ENCODE measurements at regions of chr2 and their contacts with region 1.

Region 1: DNA sequence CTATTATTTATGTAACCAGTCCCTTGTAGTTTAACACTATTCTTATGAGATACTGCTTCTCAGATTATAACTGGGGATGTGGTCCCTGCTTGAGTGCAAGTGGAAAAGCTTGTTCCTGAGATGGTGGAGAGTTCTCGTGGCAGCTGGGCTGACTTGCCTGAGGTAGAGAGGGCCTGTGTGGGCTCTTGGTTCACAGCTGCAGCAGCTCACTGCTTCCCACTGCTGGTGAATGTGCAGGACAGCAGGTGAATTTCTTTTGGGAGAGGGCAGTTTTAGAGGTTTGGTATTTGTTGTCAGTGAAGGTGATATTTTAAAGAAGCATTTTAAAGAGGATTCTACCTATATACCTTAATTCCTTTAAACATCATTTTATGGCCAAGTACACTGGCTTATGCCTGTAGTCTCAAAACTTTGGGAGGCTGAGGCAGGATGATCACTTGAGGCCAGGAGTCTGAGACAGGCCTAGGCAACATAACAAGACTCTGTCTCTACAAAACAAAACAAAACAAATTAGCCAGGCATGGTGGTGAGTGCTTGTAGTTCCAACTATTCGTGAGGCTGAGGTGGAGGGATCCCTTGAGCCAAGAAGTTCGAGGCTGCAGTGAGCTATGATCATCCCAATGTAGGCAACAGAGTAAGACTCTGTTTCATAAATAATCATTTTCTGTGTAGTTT is 94.8 kb downstream of the MTA3 start:
- DNase-seq: peak; percentile 84
- H3K4me3 ChIP-seq: peak overlapping the region in 1 of 2 experiments; percentile 7; a peak in 1 of 4 replicates
- H3K27ac ChIP-seq: no peak overlapping the region
- H3K4me1 ChIP-seq: peaks cover 0 to 9% of the 10 kb centered on the region in 2 experiments; a peak in 1 of 4 replicates
- H3K27me3 ChIP-seq: no peaks in the 10 kb centered on the region
- CTCF ChIP-seq: peak; percentile 100
- EP300 ChIP-seq: no peak
- RAD21 ChIP-seq: peak; percentile 100

Region 2: GRCh38 chr2:42296226-42296625 is 367.0 kb before region 1 on chr2:
- CTCF ChIA-PET with region 1: no interaction called
- POLR2A ChIA-PET with region 1: no interaction called
- DNase-seq: no peak
- H3K4me3 ChIP-seq: no peak overlapping the region
- H3K27ac ChIP-seq: no peak overlapping the region
- H3K4me1 ChIP-seq: peaks cover 0 to 12% of the 10 kb centered on the region in 2 experiments; a peak in 2 of 4 replicates
- H3K27me3 ChIP-seq: no peaks in the 10 kb centered on the region
- CTCF ChIP-seq: no peak
- EP300 ChIP-seq: no peak
- RAD21 ChIP-seq: no peak

Region 3: GRCh38 chr2:42480402-42480801 is 182.8 kb before region 1 on chr2:
- CTCF ChIA-PET with region 1: interaction called, 11 read pairs
- POLR2A ChIA-PET with region 1: no interaction called
- DNase-seq: no peak
- H3K4me3 ChIP-seq: no peak overlapping the region
- H3K27ac ChIP-seq: no peak overlapping the region
- H3K4me1 ChIP-seq: no peaks in the 10 kb centered on the region
- H3K27me3 ChIP-seq: no peaks in the 10 kb centered on the region
- CTCF ChIP-seq: no peak
- EP300 ChIP-seq: no peak
- RAD21 ChIP-seq: no peak

Region 4: DNA sequence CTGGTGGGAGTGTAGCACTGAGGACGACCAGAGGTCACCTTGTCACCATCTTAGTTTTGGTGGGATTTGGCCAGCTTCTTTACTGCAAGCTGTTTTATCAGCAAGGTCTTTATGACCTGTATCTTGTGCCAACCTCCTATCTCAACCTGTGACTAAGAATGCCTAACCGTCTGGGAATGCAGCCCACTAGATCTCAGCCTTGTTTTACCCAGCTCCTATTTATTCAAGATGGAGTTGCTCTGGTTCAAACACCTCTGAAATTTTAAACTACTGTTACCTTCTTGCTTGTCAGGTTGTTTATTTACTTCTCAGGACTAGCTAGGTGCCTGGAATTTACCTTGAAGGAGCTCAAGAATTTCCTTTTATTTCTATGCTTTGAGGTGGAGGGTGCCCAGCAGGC is 160.0 kb before region 1 on chr2:
- CTCF ChIA-PET with region 1: interaction called, 107 read pairs
- POLR2A ChIA-PET with region 1: no interaction called
- DNase-seq: no peak
- H3K4me3 ChIP-seq: no peak overlapping the region
- H3K27ac ChIP-seq: no peak overlapping the region
- H3K4me1 ChIP-seq: no peaks in the 10 kb centered on the region
- H3K27me3 ChIP-seq: no peaks in the 10 kb centered on the region
- CTCF ChIP-seq: no peak
- EP300 ChIP-seq: no peak
- RAD21 ChIP-seq: no peak

Region 5: DNA sequence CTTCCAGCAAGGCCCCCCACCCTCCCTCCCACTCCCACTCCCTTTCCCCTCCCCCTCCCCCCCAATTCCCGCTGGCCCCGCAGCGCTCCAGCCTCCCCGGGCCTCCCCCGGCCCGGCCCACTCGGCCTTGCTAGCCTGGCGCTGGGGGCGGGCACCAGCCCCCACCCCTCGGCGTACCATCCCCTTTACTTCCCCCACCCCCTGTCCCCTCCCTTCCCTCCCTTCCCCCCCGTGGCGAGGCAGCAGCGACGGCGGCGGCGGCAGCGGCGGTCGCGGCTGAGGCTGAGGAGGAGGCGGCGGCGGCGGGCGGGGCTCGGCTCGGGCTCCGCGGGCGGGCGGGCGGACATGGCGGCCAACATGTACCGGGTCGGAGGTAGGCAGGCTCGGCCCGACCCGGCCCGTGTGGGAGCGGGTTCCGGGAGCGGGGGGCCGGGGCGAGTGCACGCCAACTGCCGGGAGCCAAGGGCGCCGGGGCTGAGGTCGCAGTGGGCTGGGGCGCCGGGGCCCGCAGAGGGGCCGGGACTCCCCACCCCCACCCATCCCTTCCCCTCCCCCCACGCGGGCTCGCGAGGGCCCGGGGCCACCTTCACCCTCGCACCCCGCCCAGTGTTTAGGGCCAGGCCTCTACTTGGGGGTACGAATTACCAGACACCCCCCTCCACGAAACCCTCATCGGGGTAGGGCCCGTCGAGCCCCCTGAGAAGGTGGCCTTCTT is 94.7 kb before region 1 on chr2 and contains the start of gene MTA3:
- CTCF ChIA-PET with region 1: interaction called, 27 read pairs
- POLR2A ChIA-PET with region 1: no interaction called
- DNase-seq: peak; percentile 93
- H3K4me3 ChIP-seq: peak within 1 kb of the TSS; percentile 63 to 78
- H3K27ac ChIP-seq: peak within 1 kb of the TSS; percentile 40 to 88
- H3K4me1 ChIP-seq: peaks cover 0 to 12% of the 10 kb centered on the region in 2 experiments; a peak in 2 of 4 replicates
- H3K27me3 ChIP-seq: no peaks in the 10 kb centered on the region
- CTCF ChIP-seq: no peak
- EP300 ChIP-seq: no peak
- RAD21 ChIP-seq: no peak
- polyA plus RNA-seq, gene MTA3: 30.8 and 32.3 TPM in 2 replicates

Region 6: GRCh38 chr2:42652086-42652485 is 11.2 kb before region 1 on chr2:
- CTCF ChIA-PET with region 1: interaction called, 33 read pairs
- POLR2A ChIA-PET with region 1: no interaction called
- DNase-seq: no peak
- H3K4me3 ChIP-seq: no peak overlapping the region
- H3K27ac ChIP-seq: no peak overlapping the region
- H3K4me1 ChIP-seq: peaks cover 0 to 2% of the 10 kb centered on the region in 2 experiments; a peak in 2 of 4 replicates
- H3K27me3 ChIP-seq: no peaks in the 10 kb centered on the region
- CTCF ChIP-seq: no peak
- EP300 ChIP-seq: no peak
- RAD21 ChIP-seq: no peak

Region 7: GRCh38 chr2:42824454-42824807 is 161.2 kb after region 1 on chr2:
- CTCF ChIA-PET with region 1: no interaction called
- POLR2A ChIA-PET with region 1: no interaction called
- DNase-seq: no peak
- H3K4me3 ChIP-seq: no peak overlapping the region
- H3K27ac ChIP-seq: no peak overlapping the region
- H3K4me1 ChIP-seq: peaks cover 0 to 12% of the 10 kb centered on the region in 2 experiments; a peak in 1 of 4 replicates
- H3K27me3 ChIP-seq: no peaks in the 10 kb centered on the region
- CTCF ChIP-seq: no peak
- EP300 ChIP-seq: no peak
- RAD21 ChIP-seq: no peak

Region 8: GRCh38 chr2:42835577-42836371 is 172.5 kb after region 1 on chr2:
- CTCF ChIA-PET with region 1: no interaction called
- POLR2A ChIA-PET with region 1: no interaction called
- DNase-seq: no peak
- H3K4me3 ChIP-seq: no peak overlapping the region
- H3K27ac ChIP-seq: peak overlapping the region in 1 of 2 experiments; percentile 22; a peak in 2 of 4 replicates
- H3K4me1 ChIP-seq: no peaks in the 10 kb centered on the region
- H3K27me3 ChIP-seq: no peaks in the 10 kb centered on the region
- CTCF ChIP-seq: no peak
- EP300 ChIP-seq: no peak
- RAD21 ChIP-seq: no peak

Region 9: DNA sequence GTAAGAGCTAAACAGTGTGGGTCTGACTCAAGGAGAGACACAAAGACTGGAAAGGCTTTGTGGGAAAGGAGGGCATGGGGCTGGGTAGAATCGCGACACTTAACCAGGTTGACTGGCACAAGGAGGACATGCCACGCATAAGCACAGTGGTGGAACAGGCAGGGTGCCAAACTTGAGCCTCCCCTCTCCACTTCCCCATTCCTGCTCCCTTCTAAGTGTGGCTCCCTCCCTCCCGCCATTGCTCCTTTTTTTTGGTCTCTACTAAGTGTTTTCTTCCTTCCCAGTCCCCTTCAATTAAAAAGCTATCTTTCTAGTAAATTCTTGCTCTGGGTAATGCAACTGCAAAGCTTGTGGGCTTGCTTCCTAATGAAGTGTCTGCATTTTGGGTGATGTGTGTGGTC is 603.5 kb after region 1 on chr2:
- CTCF ChIA-PET with region 1: no interaction called
- POLR2A ChIA-PET with region 1: no interaction called
- DNase-seq: no peak
- H3K4me3 ChIP-seq: no peak overlapping the region
- H3K27ac ChIP-seq: peak overlapping the region; percentile 5 to 99; a peak in 3 of 4 replicates
- H3K4me1 ChIP-seq: peaks cover 20 to 66% of the 10 kb centered on the region in 2 experiments
- H3K27me3 ChIP-seq: no peaks in the 10 kb centered on the region
- CTCF ChIP-seq: no peak
- EP300 ChIP-seq: no peak
- RAD21 ChIP-seq: 0 out of 2 replicates have a peak, but pooled peaks have one; percentile 13

Measured in SK-N-SH (cell line).